Activated naive CD8-positive, alpha-beta T cell treated with anti-CD3 and anti-CD28 coated beads, Interleukin-2, amount 10 ng/mL, durations not matched to agents 7 days and 5 days (primary cell): ENCODE measurements at regions of chr3 and their contacts with region 1.

Region 1: GRCh38 chr3:150603153-150603979 is at the start of gene SELENOT:
- DNase-seq: peak; percentile 98
- ATAC-seq: peak; percentile 91
- H3K4me3 Mint-ChIP-seq: peak within 1 kb of the TSS; percentile 88
- H3K27ac Mint-ChIP-seq: peak within 1 kb of the TSS; percentile 92
- H3K4me1 Mint-ChIP-seq: peaks cover 46% of the 10 kb centered on the region
- H3K27me3 Mint-ChIP-seq: no peaks in the 10 kb centered on the region
- total RNA-seq, gene SELENOT: 92.5 to 94.2 TPM

Region 2: DNA sequence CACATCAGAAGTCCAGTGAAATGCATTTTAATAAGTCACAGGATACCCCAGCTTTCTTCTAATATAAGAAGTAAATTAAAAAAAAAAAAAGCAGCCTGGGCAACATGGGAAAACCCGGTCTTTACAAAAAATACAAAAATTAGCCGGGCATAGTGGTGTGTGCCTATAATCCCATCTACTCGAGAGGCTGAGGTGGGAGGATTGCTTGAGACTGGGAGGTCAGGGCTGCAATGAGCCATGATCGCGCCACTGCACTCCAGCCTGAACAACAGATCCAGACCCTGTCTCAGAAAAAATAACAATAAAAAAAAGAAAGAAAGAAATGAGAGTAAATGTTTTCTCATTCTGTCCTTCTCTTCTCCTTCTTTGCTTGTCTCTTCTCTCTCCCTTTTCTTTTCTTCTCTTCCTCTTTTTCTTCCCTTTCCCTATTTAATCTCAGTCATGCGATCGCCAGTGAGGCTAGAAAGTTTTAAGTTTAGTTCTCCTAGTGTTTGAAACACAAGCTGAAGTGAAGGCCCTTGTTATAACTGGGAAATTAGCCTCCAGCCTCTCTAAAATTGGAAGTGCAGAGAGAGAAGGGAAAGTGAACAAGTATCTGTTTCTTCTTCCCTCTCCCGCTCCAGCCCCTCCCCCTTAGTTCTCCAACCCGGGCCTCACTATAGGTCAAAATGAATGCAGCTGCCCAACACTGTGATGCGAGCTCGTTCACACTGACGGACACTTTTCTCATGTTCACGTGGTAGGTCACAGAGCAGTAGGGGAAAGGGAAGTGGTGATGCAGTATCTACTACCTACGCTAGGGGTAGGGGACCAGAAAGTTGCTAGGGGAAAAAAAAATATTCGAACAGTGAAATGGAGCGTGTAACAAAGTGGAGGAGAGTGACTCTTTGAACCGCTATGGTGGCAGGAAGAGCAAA is 218.8 kb before region 1 on chr3:
- POLR2A ChIA-PET with region 1: no interaction called
- DNase-seq: peak; percentile 37
- ATAC-seq: peak; percentile 96
- H3K4me3 Mint-ChIP-seq: peak overlapping the region; percentile 71
- H3K27ac Mint-ChIP-seq: peak overlapping the region; percentile 80
- H3K4me1 Mint-ChIP-seq: peaks cover 20% of the 10 kb centered on the region
- H3K27me3 Mint-ChIP-seq: no peaks in the 10 kb centered on the region

Region 3: DNA sequence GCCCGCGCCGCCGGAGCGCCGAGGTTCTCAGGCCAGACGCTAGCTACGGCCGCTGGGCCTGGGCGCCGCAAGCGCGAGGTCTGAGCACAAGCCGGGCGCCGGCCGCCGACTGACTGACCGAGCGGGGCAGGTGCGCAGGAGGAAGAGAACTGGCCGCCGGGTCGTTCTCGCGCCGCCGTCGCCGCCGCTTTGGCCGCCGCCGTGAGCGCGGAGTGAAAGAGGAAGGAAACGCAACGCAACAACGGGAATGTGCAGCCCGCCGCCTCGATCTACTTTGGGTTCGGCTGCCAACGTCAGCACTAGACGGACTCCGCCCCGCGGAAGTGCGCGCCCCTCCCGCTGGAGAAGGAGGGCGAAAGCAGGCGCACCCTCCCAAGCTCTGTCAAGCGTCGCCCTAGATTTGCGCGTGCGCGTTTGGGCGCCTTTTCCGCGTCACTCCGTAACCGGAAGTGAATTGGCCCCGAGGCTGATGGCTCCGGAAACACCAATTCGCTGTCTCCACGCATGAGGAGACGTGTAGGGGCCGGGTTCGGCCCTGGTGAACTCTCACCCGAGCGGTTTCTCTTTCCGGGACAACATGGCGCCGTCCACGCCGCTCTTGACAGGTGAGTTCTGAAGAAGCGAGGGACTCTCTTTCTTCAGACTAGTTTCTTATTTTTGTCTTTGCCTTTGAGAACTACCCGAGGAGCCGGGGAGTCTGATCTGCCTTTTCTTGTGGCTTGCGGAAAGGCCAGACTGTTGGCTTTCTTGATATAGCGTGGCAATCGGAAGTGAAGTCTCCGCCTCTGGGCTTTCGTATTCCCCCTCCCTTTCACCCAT is 56.9 kb before region 1 on chr3 and contains the starts of genes EIF2A and SERP1:
- POLR2A ChIA-PET with region 1: interaction called, 31 read pairs
- DNase-seq: peak; percentile 98
- ATAC-seq: peak; percentile 92
- H3K4me3 Mint-ChIP-seq: peak within 1 kb of the TSS; percentile 100
- H3K27ac Mint-ChIP-seq: peak within 1 kb of the TSS; percentile 96
- H3K4me1 Mint-ChIP-seq: peaks cover 46% of the 10 kb centered on the region
- H3K27me3 Mint-ChIP-seq: no peaks in the 10 kb centered on the region
- total RNA-seq, gene EIF2A: 82.2 to 84.2 TPM
- total RNA-seq, gene SERP1: 89.4 to 89.8 TPM

Region 4: DNA sequence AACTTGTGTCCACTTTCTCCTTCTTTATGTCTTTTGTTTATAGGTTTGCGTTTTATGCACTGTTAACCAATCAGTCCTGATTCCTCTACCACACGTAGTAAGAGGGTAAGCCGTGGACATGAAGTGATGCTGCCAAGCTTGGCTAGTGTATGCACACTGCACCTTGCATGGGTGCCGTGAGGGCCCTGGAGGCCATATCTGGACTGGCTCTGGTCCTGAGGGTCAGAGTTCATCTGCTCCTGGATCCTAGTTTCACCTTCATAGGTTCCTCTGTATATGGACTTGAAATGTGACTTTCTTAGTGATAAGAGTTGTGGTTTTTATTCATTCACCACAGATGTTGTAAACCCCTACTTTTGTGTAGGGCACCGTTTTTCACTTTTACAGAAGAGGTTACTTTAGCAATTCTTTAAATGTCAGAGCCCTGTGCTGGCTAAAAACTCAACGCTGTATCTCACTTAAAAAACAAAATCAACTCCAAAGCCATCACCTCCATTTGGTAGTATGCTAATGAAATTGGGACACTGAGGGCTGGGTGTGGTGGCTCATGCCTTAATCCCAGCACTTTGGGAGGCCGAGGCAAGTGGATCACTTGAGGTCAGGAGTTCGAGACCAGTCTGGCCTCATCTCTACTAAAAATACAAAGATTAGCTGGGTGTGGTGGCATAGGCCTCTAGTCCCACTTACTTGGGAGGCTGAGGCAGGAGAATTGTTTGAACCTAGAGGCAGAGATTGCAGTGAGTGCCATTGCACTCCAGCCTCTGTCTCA is 136.7 kb after region 1 on chr3:
- POLR2A ChIA-PET with region 1: no interaction called
- DNase-seq: no peak
- ATAC-seq: peak; percentile 27
- H3K4me3 Mint-ChIP-seq: no peak overlapping the region
- H3K27ac Mint-ChIP-seq: no peak overlapping the region
- H3K4me1 Mint-ChIP-seq: peaks cover 40% of the 10 kb centered on the region
- H3K27me3 Mint-ChIP-seq: no peaks in the 10 kb centered on the region